Common myeloid progenitor, CD34-positive (primary cell): ENCODE measurements at regions of chr20 and their contacts with region 1.

Region 1: DNA sequence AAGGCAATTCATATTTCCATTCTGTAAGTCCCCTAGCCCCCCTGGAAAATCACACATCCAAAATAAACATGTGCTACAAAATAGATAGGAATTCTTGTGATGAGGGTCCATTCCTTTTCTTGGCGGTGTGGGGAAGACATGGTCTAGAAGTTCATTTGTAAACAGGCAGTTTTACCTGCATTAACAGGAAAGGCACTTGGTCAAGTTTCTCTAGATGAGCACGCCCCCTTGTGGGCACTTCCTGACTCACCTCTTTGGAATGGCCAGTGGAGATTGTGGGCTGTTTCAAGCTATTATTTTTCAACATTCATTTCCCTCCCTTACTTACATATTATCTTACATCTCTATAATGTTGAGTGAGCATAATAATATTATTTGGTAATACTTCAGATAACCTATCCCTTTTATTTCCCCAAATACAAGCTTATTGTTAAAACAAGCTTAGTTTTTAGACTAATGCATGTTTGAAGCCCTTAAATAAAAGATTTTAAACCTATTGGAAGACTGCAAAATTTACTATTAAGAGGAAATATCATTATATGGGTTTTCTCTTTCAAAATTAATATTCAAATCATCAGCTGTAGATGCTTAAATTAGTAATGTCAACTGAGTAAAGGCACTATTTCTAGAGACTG is 92.1 kb downstream of the TASP1 start:
- DNase-seq: peak; percentile 49 to 71 (median 62)
- H3K4me3 ChIP-seq: no peak overlapping the region
- H3K27ac ChIP-seq: no peak overlapping the region
- H3K4me1 ChIP-seq: no peaks in the 10 kb centered on the region
- H3K27me3 ChIP-seq: no peaks in the 10 kb centered on the region

Region 2: DNA sequence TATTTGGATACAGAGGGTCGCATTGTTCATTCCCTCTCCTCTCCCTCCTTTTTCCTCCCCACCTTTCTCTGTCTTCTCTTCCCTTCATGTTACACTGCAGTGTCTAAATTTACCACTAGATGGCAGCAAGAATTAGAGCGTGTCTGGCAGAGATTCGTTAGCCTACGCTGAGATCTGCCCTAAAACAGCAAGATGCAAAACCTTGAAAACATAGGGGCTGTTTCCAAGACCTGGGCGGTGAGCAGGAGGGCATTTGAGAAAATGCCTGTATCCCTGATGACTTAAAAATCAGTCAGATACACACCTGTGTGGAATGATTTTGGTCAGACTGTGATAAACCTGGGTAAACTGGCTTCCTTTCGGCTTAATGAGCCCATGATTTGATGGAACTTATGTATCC is 427.0 kb before region 1 on chr20:
- CTCF ChIA-PET with region 1: interaction called, 16 read pairs
- POLR2A ChIA-PET with region 1: no interaction called
- DNase-seq: peak; percentile 44 to 81 (median 75)
- H3K4me3 ChIP-seq: no peak overlapping the region
- H3K27ac ChIP-seq: no peak overlapping the region
- H3K4me1 ChIP-seq: no peaks in the 10 kb centered on the region
- H3K27me3 ChIP-seq: peaks cover 0 to 16% (median 0%) of the 10 kb centered on the region in 5 experiments

Region 3: GRCh38 chr20:13336308-13337089 is 210.1 kb before region 1 on chr20:
- CTCF ChIA-PET with region 1: no interaction called
- POLR2A ChIA-PET with region 1: no interaction called
- DNase-seq: no peak
- H3K4me3 ChIP-seq: no peak overlapping the region
- H3K27ac ChIP-seq: no peak overlapping the region
- H3K4me1 ChIP-seq: no peaks in the 10 kb centered on the region
- H3K27me3 ChIP-seq: no peaks in the 10 kb centered on the region

Region 4: DNA sequence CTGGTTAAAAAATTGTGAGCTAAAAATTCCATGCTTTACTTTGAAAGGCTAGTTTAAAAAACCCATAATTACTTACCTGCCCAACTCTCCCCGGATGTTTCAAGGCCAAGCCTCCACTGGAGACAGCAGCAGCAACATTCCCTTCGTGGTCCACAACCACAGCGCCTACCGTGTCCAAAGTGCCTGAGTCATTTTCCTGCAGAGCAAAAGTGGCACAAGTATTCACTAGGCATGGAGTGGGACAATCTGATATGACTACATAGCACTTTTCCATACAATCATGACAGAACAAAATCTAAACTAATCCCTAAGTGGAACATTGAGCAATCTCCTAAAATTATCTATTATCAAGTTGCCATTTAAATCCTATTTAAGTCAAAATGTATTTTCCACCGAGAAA is 12.7 kb before region 1 on chr20:
- CTCF ChIA-PET with region 1: interaction called, 22 read pairs
- POLR2A ChIA-PET with region 1: no interaction called
- DNase-seq: no peak
- H3K4me3 ChIP-seq: no peak overlapping the region
- H3K27ac ChIP-seq: no peak overlapping the region
- H3K4me1 ChIP-seq: no peaks in the 10 kb centered on the region
- H3K27me3 ChIP-seq: no peaks in the 10 kb centered on the region

Region 5: GRCh38 chr20:13613917-13614316 is 67.3 kb after region 1 on chr20:
- CTCF ChIA-PET with region 1: no interaction called
- POLR2A ChIA-PET with region 1: no interaction called
- DNase-seq: no peak
- H3K4me3 ChIP-seq: no peak overlapping the region
- H3K27ac ChIP-seq: no peak overlapping the region
- H3K4me1 ChIP-seq: no peaks in the 10 kb centered on the region
- H3K27me3 ChIP-seq: no peaks in the 10 kb centered on the region